ENCODE measurements at regions of chr1 and their contacts with region 1.

Region 1: DNA sequence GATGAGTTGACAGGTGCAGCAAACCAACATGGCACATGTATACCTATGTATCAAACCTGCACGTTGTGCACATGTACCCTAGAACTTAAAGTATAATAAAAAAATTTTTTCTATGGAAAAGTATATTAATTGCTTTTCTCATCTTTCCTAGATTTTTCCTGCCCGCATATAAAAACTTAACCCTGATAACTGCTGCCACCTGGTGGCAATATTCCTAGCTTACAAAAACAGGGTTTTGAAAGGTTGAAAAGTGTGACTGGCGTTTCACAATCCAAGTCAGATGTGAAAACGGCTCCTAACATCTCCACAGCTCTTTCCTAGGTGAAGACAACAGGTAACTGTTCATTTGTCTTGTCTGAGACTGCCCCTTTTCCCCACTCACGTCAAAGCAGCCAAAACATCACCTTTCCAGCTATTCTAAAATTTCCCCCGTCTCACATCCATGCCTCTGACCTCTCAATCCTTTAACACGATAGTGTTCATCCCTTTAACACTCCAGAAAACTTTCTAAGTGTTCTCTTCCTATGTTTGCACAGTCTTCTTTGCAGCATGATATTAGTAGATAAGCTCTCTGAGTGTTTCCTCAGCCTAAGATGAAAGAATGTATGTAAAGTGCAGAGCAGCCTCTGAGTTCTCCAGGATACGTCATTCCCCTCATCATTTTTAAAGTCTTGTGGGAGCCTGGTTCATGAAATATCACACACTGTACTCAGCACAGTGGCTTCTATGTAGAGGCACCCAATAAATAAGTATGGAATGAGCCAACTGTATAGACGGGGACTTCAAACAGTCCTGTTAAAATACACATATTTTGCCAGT is 27.5 kb downstream of the OVGP1 start:
- DNase-seq: peak; percentile 38
- H3K4me3 ChIP-seq: no peak overlapping the region
- H3K27ac ChIP-seq: no peak overlapping the region
- H3K4me1 ChIP-seq: no peaks in the 10 kb centered on the region
- H3K27me3 ChIP-seq: peaks cover 22% of the 10 kb centered on the region
- CTCF ChIP-seq: peak; percentile 69 to 73 (median 72)
- EP300 ChIP-seq: no peak
- POLR2A ChIP-seq: no peak

Region 2: GRCh38 chr1:111030590-111030989 is 369.4 kb before region 1 on chr1:
- in situ Hi-C with region 1: loop called in 1 of 4 experiments (anchors 25 kb)
- intact Hi-C with region 1: no loop called
- DNase-seq: peak; percentile 48
- H3K4me3 ChIP-seq: no peak overlapping the region
- H3K27ac ChIP-seq: no peak overlapping the region
- H3K4me1 ChIP-seq: no peaks in the 10 kb centered on the region
- H3K27me3 ChIP-seq: no peaks in the 10 kb centered on the region
- CTCF ChIP-seq: peak; percentile 43 to 68 (median 57)
- EP300 ChIP-seq: no peak
- POLR2A ChIP-seq: no peak

Measured in transverse colon (tissue), 4 donors.